ENCODE measurements at regions of chr2 and their contacts with region 1.

Region 1: DNA sequence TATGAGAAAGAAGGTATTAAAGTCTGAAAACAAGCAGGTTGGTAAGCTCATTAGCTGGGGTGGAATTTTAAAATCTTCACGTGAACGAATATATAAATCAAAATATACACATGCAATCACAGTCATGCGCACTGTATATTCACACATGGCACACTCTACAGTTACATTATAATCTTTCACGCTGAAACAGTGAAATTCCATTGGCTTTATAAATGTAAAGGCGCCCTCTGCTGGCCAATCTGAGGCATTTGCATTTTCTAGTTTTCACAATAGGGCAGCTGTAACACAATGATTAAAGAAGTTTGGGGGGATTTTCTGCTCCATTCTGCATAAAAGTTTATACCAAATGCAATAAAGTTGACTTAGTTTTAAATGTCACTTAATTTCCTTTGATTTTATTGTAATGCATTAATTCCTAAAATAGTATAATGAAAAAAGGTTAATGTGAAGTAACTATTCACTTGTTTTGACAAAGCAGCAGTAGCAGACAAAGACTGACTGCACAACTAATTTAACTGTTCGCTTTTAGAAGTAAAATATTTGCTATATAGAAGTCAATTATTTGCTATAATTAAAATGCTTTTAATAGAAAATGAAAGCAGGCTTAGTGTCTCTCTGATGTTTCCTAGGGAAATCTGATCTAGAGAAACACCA is 17.2 kb downstream of the IFIH1 start:
- DNase-seq: peak; percentile 71
- H3K4me3 Mint-ChIP-seq: no peak overlapping the region
- H3K27ac Mint-ChIP-seq: no peak overlapping the region
- H3K4me1 Mint-ChIP-seq: no peaks in the 10 kb centered on the region
- H3K27me3 Mint-ChIP-seq: no peaks in the 10 kb centered on the region

Region 2: DNA sequence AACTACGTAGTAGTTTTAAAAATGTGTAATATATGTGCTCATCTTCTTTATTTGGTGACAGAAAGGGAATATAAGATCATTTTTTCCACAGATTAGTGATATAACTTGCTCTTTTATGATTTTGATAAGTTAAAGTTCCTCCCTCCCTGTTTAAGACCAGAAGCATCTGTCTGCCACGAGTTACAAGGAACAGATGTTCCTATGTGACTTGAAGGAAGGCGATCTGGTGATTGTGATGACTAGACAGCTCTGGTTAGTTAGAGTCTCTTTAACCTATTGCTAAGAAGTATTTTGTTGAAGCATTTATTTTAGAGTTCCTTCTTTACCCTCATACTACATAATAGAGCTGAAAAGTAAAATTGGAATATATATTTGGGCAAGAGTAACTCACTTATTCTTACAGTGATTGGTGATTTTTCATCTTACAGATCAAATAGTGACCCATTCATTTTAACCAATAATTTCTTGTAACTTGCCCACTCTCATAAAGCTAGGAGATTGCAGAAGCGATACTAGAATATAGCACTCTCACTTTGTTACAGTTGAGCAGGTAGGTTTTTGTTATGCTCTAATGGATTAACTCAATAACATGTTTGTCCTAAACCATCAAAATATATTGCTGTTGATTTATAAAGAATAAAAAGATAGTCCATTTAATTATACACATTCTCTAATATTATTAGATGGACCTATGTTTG is 458.4 kb before region 1 on chr2:
- CTCF ChIA-PET with region 1: no interaction called
- intact Hi-C with region 1: no loop called
- DNase-seq: no peak
- H3K4me3 Mint-ChIP-seq: no peak overlapping the region
- H3K27ac Mint-ChIP-seq: no peak overlapping the region
- H3K4me1 Mint-ChIP-seq: peaks cover 9% of the 10 kb centered on the region
- H3K27me3 Mint-ChIP-seq: no peaks in the 10 kb centered on the region

Region 3: GRCh38 chr2:162153608-162154224 is 147.6 kb before region 1 on chr2:
- CTCF ChIA-PET with region 1: interaction called, 46 read pairs
- intact Hi-C with region 1: loop called (anchors 1 kb)
- DNase-seq: peak; percentile 81
- H3K4me3 Mint-ChIP-seq: no peak overlapping the region
- H3K27ac Mint-ChIP-seq: no peak overlapping the region
- H3K4me1 Mint-ChIP-seq: no peaks in the 10 kb centered on the region
- H3K27me3 Mint-ChIP-seq: peaks cover 14% of the 10 kb centered on the region

Region 4: DNA sequence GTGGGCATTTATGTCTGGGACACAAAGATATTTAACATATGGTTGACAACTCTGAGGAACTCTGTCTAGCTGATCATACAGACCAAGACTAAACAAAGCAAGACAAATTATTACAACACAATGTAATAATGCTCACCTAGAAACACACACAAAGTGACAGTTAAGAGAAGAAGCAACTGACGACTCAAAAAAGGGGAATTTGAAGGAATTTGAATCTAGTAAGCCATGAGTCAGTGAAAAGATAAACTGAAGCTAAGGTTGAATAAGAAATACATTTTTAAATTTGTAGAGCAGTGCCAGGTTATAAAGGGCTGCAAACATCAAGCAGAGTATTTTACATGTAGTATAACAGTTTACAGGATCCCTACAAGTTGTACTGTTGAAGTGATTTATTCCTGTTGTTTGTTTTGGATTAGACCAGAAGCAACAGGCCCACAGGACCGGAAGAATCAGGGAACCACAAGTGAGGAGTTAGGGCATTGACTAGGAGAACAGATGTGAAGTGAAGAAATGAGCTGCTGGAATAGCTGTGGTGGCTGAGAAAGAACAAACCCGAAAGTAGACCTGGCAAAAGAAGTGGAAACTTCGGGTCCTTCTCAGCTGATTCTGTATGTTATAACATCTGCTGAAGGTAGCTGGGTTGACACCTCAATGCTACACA is 18.4 kb before region 1 on chr2:
- CTCF ChIA-PET with region 1: interaction called, 10 read pairs
- intact Hi-C with region 1: no loop called
- DNase-seq: no peak
- H3K4me3 Mint-ChIP-seq: no peak overlapping the region
- H3K27ac Mint-ChIP-seq: no peak overlapping the region
- H3K4me1 Mint-ChIP-seq: no peaks in the 10 kb centered on the region
- H3K27me3 Mint-ChIP-seq: no peaks in the 10 kb centered on the region

Region 5: DNA sequence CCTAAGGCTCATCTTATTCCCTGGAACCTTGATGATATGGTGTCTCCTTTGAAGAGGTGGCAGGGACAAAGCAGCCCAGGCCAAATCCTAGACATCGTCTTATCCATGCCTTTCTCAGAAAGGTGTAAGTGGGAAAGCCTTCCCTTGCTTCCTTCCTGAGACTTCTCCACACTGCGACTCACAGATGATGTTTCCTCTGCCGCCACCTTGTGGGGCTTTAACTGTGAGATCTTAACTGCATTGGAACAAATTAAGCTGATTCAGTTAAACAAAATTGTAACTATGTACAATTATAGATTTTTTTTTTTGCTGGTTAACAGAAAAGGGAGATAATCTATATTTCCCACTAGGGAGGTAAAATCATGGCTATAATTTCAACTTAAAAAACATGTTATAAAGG is 32.7 kb after region 1 on chr2:
- CTCF ChIA-PET with region 1: interaction called, 8 read pairs
- intact Hi-C with region 1: loop called (anchors 1 kb)
- DNase-seq: peak; percentile 53
- H3K4me3 Mint-ChIP-seq: no peak overlapping the region
- H3K27ac Mint-ChIP-seq: no peak overlapping the region
- H3K4me1 Mint-ChIP-seq: no peaks in the 10 kb centered on the region
- H3K27me3 Mint-ChIP-seq: no peaks in the 10 kb centered on the region

Measured in activated naive CD4-positive, alpha-beta T cell treated with anti-CD3 and anti-CD28 coated beads for 36 hours (primary cell).